ENCODE measurements at regions of chr11 and their contacts with region 1.

Region 1: GRCh38 chr11:32154275-32154674 is 63.4 kb downstream of the RCN1 start:
- DNase-seq: peak in 1 of 2 experiments; percentile 37
- H3K4me3 ChIP-seq: no peak overlapping the region
- H3K27ac ChIP-seq: no peak overlapping the region
- H3K4me1 ChIP-seq: no peaks in the 10 kb centered on the region
- H3K27me3 ChIP-seq: no peaks in the 10 kb centered on the region
- CTCF ChIP-seq: peak; percentile 45; the same call in 1 of the 2 replicates

Region 2: GRCh38 chr11:32052218-32052617 is 102.1 kb before region 1 on chr11:
- CTCF ChIA-PET with region 1: interaction called, 3 read pairs
- POLR2A ChIA-PET with region 1: no interaction called
- intact Hi-C with region 1: loop called (anchors 1 kb)
- DNase-seq: peak in 1 of 2 experiments; percentile 54
- H3K4me3 ChIP-seq: no peak overlapping the region
- H3K27ac ChIP-seq: no peak overlapping the region
- H3K4me1 ChIP-seq: no peaks in the 10 kb centered on the region
- H3K27me3 ChIP-seq: peaks cover 3% of the 10 kb centered on the region; the same call in 1 of the 2 replicates
- CTCF ChIP-seq: peak; percentile 91

Region 3: DNA sequence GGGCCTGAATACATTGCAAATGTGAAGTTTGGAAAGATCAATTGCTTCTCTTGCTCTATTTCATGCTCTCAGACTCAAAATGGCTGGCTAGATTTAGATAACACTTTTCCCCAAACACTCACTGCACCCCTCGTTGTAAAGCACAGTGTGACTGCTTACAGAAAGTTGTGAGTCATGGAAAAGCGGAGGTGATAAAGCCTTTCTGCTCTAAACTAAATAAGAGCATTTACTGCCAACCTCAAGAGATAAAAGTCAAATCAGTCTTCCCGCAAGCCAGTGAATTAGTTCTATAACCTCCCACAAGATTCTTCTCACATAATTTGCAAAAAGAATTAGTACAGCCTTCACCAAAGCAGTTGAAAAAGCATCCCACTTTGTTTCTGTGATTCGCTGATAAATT is 112.3 kb after region 1 on chr11:
- CTCF ChIA-PET with region 1: no interaction called
- POLR2A ChIA-PET with region 1: no interaction called
- intact Hi-C with region 1: no loop called
- DNase-seq: no peak
- H3K4me3 ChIP-seq: no peak overlapping the region
- H3K27ac ChIP-seq: no peak overlapping the region
- H3K4me1 ChIP-seq: no peaks in the 10 kb centered on the region
- H3K27me3 ChIP-seq: 0 out of 2 replicates have a peak, but pooled peaks cover 5% of the 10 kb centered on the region
- CTCF ChIP-seq: no peak